ENCODE measurements at regions of chr17 and their contacts with region 1.

Region 1: GRCh38 chr17:42388381-42389134 is at the start of gene STAT3:
- DNase-seq: peak; percentile 100
- ATAC-seq: peak; percentile 88
- H3K4me3 Mint-ChIP-seq: peak within 1 kb of the TSS; percentile 95
- H3K27ac Mint-ChIP-seq: peak within 1 kb of the TSS; percentile 100
- H3K4me1 Mint-ChIP-seq: peaks cover 57% of the 10 kb centered on the region
- H3K27me3 Mint-ChIP-seq: no peaks in the 10 kb centered on the region
- total RNA-seq, gene STAT3: 332 to 345 TPM

Region 2: DNA sequence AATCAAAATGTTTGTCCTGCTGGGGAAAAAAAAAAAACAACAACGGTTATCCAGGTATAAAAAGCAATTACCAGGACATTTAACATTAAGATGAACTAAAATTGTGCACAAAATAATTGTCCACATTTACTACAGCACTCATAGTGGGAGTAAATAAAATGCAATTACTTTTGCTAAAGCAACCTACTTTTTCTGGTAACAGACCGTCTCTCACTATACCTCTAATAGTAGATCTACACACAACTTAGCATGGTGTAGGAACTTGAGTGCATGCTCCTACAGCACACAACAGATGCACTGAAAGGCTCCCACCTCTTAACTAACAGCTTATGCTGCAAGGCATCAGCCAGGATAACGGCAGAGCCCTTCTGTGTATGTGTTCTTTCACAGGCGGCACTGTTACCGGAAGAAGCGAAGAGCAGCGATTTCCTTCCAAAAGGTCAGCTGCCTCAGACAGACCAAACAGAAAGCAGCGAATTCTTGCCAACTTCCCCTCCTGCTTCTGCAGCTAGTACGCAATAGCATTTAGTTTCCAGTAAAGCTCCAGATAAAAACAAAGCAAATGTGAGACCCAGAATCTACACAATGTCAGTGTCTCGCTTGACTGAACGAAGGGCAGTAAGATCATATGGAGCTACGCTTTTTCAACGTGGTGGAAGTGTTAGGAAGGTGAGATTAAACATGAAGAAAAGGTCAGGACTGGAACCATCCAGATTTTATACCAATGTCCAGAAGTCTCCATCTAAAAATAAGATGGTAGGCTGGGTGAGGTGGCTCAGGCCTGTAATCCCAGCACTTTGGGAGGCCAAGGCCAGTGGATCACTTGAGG is 140.0 kb before region 1 on chr17:
- CTCF ChIA-PET with region 1: interaction called, 6 read pairs
- POLR2A ChIA-PET with region 1: interaction called, 7 read pairs
- intact Hi-C with region 1: loop called in 1 of 2 experiments (anchors 1 kb)
- DNase-seq: peak; percentile 87
- ATAC-seq: peak; percentile 81
- H3K4me3 Mint-ChIP-seq: peak overlapping the region; percentile 79
- H3K27ac Mint-ChIP-seq: peak overlapping the region; percentile 100
- H3K4me1 Mint-ChIP-seq: peaks cover 71% of the 10 kb centered on the region
- H3K27me3 Mint-ChIP-seq: no peaks in the 10 kb centered on the region

Region 3: GRCh38 chr17:42312285-42313130 is 76.0 kb before region 1 on chr17:
- CTCF ChIA-PET with region 1: interaction called, 9 read pairs
- POLR2A ChIA-PET with region 1: interaction called, 9 read pairs
- intact Hi-C with region 1: loop called in 1 of 2 experiments (anchors 1 kb)
- DNase-seq: peak; percentile 94
- ATAC-seq: peak; percentile 69
- H3K4me3 Mint-ChIP-seq: peak overlapping the region; percentile 66
- H3K27ac Mint-ChIP-seq: peak overlapping the region; percentile 96
- H3K4me1 Mint-ChIP-seq: peaks cover 90% of the 10 kb centered on the region
- H3K27me3 Mint-ChIP-seq: no peaks in the 10 kb centered on the region

Region 4: DNA sequence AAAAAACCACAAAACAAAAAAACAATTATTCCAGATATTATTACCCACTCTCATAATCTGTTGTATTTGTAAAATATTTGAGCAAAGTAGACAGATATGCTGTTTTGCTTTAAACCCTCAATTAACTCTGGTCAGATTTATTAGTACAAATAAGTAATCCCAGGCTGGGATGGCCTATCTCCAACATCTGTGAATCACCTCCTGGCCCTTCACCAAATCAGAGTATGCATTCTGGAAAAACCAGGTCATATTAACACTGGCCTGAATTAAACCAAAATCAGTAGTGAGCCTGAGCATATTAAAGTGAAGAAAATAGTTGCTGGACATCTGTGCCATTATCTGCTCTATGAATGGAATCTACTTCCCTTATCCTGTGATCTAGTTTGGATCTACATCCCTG is 41.4 kb before region 1 on chr17:
- CTCF ChIA-PET with region 1: interaction called, 25 read pairs
- POLR2A ChIA-PET with region 1: interaction called, 25 read pairs
- intact Hi-C with region 1: no loop called
- DNase-seq: no peak
- ATAC-seq: no peak
- H3K4me3 Mint-ChIP-seq: no peak overlapping the region
- H3K27ac Mint-ChIP-seq: peak overlapping the region; percentile 41
- H3K4me1 Mint-ChIP-seq: peaks cover 57% of the 10 kb centered on the region
- H3K27me3 Mint-ChIP-seq: no peaks in the 10 kb centered on the region

Region 5: GRCh38 chr17:42405963-42406495 is 17.5 kb after region 1 on chr17:
- CTCF ChIA-PET with region 1: interaction called, 36 read pairs
- POLR2A ChIA-PET with region 1: interaction called, 9 read pairs
- intact Hi-C with region 1: no loop called
- DNase-seq: peak; percentile 91
- ATAC-seq: peak; percentile 69
- H3K4me3 Mint-ChIP-seq: no peak overlapping the region
- H3K27ac Mint-ChIP-seq: no peak overlapping the region
- H3K4me1 Mint-ChIP-seq: peaks cover 19% of the 10 kb centered on the region
- H3K27me3 Mint-ChIP-seq: no peaks in the 10 kb centered on the region

Region 6: DNA sequence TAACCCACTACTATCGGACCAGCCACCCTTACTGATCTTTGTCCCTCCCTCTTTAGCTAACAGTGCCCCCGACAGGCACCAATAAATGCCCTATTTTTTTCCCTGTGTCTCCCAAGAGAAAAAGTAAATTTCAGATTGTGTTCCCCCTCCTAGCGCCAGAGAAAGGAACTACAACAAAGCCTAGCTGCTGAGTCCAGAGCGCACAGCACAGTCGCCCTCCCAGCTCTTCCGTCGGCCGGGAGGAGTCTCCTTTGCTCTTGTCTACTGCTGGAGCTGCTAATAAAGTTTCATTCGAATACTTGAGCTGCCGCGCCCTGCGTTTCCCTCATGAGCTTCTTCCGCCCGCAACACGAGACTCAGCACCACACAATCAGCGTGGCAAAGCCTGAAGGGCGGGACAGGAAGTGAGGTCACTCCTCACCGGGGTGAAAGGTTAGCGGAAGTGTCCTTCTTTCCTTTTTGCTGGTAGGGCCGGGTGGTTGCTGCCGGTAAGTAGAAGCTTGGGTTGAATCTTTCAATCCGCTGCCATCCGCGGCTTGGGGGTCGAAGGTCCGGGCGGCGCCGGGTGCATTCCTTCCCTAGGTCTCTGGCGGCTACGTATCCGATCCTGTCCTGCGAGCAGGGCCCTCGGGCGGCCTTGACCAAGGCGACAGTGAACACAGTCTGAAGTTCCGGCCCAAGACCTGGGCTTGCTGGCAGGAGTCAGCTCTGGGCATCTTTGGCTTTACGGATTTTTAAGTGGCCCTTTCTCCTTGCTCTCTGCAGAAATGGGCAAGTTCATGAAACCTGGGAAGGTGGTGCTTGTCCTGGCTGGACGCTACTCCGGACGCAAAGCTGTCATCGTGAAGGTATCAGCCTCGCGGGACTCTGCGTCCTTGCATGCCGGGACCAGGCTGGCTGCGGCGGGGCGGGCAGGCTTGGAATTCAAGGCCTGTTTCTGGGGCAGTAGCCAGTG is 609.7 kb after region 1 on chr17 and contains the start of gene RPL27:
- CTCF ChIA-PET with region 1: no interaction called
- POLR2A ChIA-PET with region 1: interaction called, 3 read pairs
- intact Hi-C with region 1: loop called in 1 of 2 experiments (anchors 1 kb)
- DNase-seq: peak; percentile 98
- ATAC-seq: peak; percentile 98
- H3K4me3 Mint-ChIP-seq: peak within 1 kb of the TSS; percentile 95
- H3K27ac Mint-ChIP-seq: peak within 1 kb of the TSS; percentile 99
- H3K4me1 Mint-ChIP-seq: peaks cover 31% of the 10 kb centered on the region
- H3K27me3 Mint-ChIP-seq: no peaks in the 10 kb centered on the region
- total RNA-seq, gene RPL27: 1,703 to 2,161 TPM